ENCODE measurements at regions of chr10 and their contacts with region 1.

Region 1: GRCh38 chr10:116690356-116691322 is 51.7 kb downstream of the HSPA12A start:
- DNase-seq: peak in 1 of 2 donors; percentile 42
- ATAC-seq: peak; percentile 42 to 53 (median 47)
- H3K4me3 ChIP-seq: no peak overlapping the region
- H3K27ac ChIP-seq: no peak overlapping the region
- H3K4me1 ChIP-seq: no peaks in the 10 kb centered on the region
- H3K27me3 ChIP-seq: no peaks in the 10 kb centered on the region
- CTCF ChIP-seq: peak; percentile 41

Region 2: GRCh38 chr10:116742367-116743265 is 52.0 kb after region 1 on chr10 and contains the start of gene HSPA12A:
- intact Hi-C with region 1: loop called in 1 of 2 experiments (anchors 5 kb)
- DNase-seq: peak; percentile 83 to 87
- ATAC-seq: peak; percentile 88 to 90 (median 90)
- H3K4me3 ChIP-seq: peak within 1 kb of the TSS; percentile 89
- H3K27ac ChIP-seq: peak within 1 kb of the TSS; percentile 97
- H3K4me1 ChIP-seq: no peaks in the 10 kb centered on the region
- H3K27me3 ChIP-seq: peaks cover 0 to 6% (median 0%) of the 10 kb centered on the region in 3 donors
- CTCF ChIP-seq: peak; percentile 4
- total RNA-seq, gene HSPA12A: 7.0 to 11.4 (median 8.9) TPM

Region 3: DNA sequence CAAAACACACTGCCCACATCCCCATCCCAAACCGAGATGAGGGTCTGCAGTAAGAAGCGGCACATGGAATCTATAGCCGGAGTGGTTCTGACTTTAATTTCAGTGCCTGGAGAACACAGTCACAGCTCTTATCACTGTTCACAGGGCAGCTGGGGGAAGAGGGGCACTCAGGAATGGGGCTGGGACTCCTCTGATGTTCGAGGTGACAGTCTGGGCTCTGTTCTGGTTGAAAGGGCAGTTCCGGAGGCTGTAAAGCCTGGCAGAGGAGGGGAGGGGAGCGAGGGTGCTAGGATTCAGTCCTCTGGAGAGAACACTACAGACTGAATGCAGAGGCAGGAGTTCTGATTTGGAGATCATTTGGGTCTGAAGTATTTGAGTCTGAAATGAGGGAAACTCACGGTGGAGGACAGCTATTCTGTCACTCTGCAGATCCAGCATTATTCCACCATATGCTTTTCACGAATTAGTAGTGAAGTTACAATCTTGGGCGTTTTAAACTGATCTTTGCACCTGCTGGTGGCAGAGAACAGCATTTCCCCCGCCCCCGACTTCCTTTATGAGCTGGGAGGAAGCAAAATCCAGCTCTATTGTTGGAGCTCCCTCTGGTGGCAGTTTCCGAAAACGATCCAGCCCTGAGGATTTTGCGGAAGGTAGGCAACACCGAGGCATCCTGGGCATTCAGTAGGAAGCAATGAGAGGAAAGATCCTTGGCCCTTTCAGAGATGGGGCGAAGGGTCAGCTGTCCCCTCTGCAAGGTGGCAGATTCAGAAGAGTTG is 484.0 kb after region 1 on chr10:
- intact Hi-C with region 1: loop called in 1 of 2 experiments (anchors 10 kb)
- DNase-seq: peak; percentile 58 to 66
- ATAC-seq: peak; percentile 67 to 90 (median 78)
- H3K4me3 ChIP-seq: peak overlapping the region; percentile 50
- H3K27ac ChIP-seq: no peak overlapping the region
- H3K4me1 ChIP-seq: peaks cover 10% of the 10 kb centered on the region
- H3K27me3 ChIP-seq: peaks cover 0 to 75% (median 10%) of the 10 kb centered on the region in 3 donors
- CTCF ChIP-seq: peak; percentile 67

Measured in psoas muscle (tissue), 8 donors.